ENCODE measurements at regions of chrX and their contacts with region 1.

Region 1: DNA sequence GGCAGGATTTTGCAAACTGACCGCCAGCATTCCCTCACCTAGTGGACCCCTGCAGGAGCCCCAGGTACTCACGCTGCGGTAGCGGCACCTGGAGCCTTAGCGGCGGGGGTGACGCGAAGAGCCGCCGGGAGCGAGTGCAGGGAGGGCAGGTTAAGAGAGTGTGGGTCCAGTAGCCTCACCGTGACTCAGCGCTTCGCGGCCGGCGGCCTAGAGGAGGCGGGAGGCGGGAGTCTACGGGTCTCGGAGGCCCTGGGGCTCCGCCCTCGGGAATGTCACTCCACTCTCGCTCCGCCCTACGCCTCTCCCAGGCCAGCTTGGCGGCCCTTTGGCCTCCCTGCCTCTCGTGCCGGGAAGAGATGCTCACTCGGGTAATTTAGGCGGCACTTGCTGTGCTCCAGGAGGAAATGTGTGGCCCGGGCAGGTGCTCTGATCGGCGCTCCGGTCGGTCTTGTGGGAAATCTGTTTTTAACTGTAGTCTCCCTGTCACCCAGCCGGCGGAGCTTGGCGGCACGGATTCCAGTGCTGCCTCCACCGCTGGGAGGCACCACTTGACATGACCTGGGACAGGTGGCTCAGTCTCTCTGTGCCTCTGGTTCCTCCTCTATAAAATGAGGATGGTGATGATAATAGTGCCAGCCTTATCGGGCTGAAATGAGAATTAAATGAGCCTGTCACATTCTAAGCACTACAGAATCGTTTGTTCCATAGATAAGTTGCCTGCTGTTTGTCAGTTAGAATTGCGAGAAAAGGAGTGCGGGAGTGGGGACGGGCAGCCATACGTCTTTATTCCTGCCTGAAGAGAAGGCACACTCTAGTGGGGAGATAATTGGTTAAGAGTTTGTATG is at the start of gene PIR:
- DNase-seq: peak; percentile 90 to 91
- H3K4me3 ChIP-seq: peak within 1 kb of the TSS; percentile 53
- H3K4me3 Mint-ChIP-seq: peak within 1 kb of the TSS; percentile 82
- H3K27ac Mint-ChIP-seq: peak within 1 kb of the TSS; percentile 68
- H3K4me1 ChIP-seq: 0 out of 2 replicates have a peak, but pooled peaks cover 6% of the 10 kb centered on the region
- H3K4me1 Mint-ChIP-seq: peaks cover 6% of the 10 kb centered on the region
- H3K27me3 ChIP-seq: no peaks in the 10 kb centered on the region
- H3K27me3 Mint-ChIP-seq: no peaks in the 10 kb centered on the region
- CTCF ChIP-seq: peak in 1 of 2 experiments; percentile 57
- total RNA-seq, gene PIR: 12.0 and 15.7 TPM in 2 replicates

Region 2: GRCh38 chrX:15549189-15550012 is 56.1 kb after region 1 on chrX:
- CTCF ChIA-PET with region 1: no interaction called
- POLR2A ChIA-PET with region 1: no interaction called
- intact Hi-C with region 1: no loop called
- DNase-seq: no peak
- H3K4me3 ChIP-seq: no peak overlapping the region
- H3K4me3 Mint-ChIP-seq: no peak overlapping the region
- H3K27ac Mint-ChIP-seq: no peak overlapping the region
- H3K4me1 ChIP-seq: no peaks in the 10 kb centered on the region
- H3K4me1 Mint-ChIP-seq: no peaks in the 10 kb centered on the region
- H3K27me3 ChIP-seq: no peaks in the 10 kb centered on the region
- H3K27me3 Mint-ChIP-seq: no peaks in the 10 kb centered on the region
- CTCF ChIP-seq: no peak

Region 3: GRCh38 chrX:15564981-15565579 is 71.7 kb after region 1 on chrX:
- CTCF ChIA-PET with region 1: interaction called, 6 read pairs
- POLR2A ChIA-PET with region 1: no interaction called
- intact Hi-C with region 1: loop called (anchors 1 kb)
- DNase-seq: peak; percentile 50 to 53
- H3K4me3 ChIP-seq: no peak overlapping the region
- H3K4me3 Mint-ChIP-seq: no peak overlapping the region
- H3K27ac Mint-ChIP-seq: no peak overlapping the region
- H3K4me1 ChIP-seq: no peaks in the 10 kb centered on the region
- H3K4me1 Mint-ChIP-seq: peaks cover 6% of the 10 kb centered on the region
- H3K27me3 ChIP-seq: no peaks in the 10 kb centered on the region
- H3K27me3 Mint-ChIP-seq: peaks cover 3% of the 10 kb centered on the region
- CTCF ChIP-seq: peak; percentile 42 to 52

Region 4: DNA sequence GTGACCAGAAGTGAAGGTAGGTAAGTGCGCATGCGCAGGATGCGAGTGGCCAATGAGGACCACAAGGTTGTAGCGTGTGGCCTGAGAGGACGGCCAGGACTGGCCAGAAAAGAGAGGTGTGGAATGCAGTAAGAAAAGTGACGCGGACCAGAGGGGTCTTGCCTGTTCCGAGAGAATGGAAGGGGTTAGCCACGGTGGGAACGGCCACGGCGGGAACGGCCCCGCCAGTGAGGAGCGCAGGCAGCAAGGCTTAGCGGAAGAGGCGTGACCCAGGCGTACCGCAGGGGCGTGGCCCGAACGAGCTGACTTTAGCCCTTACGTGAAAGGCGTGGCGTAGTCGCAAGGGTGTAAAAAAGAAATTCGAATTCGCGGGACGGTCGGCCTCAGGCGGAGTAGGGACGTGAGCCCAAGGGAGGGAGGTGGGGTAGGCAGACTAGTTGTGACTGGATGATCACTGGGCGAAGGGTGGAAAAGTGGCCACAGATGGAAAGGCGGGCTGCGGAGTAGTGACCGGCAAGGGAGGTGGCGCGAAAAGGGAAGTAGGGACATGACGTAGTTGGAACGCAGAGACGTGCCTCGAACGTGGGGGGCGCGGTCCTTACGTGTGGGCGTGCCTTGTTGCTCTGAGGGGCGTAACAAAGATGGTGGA is 181.6 kb after region 1 on chrX:
- CTCF ChIA-PET with region 1: no interaction called
- POLR2A ChIA-PET with region 1: no interaction called
- intact Hi-C with region 1: loop called (anchors 5 kb)
- DNase-seq: peak; percentile 87 to 93
- H3K4me3 ChIP-seq: peak overlapping the region; percentile 77
- H3K4me3 Mint-ChIP-seq: no peak overlapping the region
- H3K27ac Mint-ChIP-seq: no peak overlapping the region
- H3K4me1 ChIP-seq: no peaks in the 10 kb centered on the region
- H3K4me1 Mint-ChIP-seq: no peaks in the 10 kb centered on the region
- H3K27me3 ChIP-seq: no peaks in the 10 kb centered on the region
- H3K27me3 Mint-ChIP-seq: no peaks in the 10 kb centered on the region
- CTCF ChIP-seq: no peak

Measured in Caco-2 (cell line).